Activated T-helper 1 cell treated with anti-CD3 and anti-CD28 coated beads, Interleukin-12 subunit alpha, Interleukin-12 subunit beta, Interleukin-2, Interleukin-4 antibody, amounts not matched to agents 30 ng/mL and 10 ng/mL and 1 ng/mL, durations not matched to agents 14 hours and 24 hours and 36 hours (primary cell): ENCODE measurements at regions of chr1 and their contacts with region 1.

Region 1: GRCh38 chr1:174800216-174800851 is 199.4 kb upstream of the CACYBP start:
- DNase-seq: peak; percentile 4
- H3K4me3 Mint-ChIP-seq: no peak overlapping the region
- H3K27ac Mint-ChIP-seq: no peak overlapping the region
- H3K4me1 Mint-ChIP-seq: peaks cover 15% of the 10 kb centered on the region
- H3K27me3 Mint-ChIP-seq: no peaks in the 10 kb centered on the region

Region 2: DNA sequence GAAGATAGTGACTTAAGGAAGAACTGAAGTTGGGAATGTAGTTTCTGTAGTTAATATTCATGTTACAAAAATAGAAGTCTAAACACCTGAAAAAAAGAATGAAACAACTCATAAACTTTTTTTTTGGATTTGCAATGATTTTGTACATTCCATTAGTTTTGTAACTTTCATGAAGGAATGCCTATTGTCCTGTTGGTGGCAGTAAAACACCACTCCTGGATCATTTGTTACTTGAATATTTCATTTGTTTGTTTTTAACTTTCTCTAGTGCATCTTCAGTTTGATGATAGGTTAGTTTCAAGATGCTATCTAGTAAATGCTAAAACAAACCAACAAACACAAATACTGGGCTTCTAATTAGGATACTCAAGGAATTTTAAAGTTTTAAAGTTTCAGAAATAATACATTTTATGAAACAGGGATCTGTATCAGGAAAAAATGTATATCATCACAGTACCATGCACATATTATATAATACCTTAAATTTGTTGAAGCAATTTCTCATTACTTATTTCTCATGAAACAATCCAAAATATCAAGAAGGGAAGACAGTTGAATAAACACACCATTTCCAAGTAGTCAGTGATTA is 30.3 kb before region 1 on chr1:
- intact Hi-C with region 1: loop called (anchors 2 kb)
- DNase-seq: no peak
- H3K4me3 Mint-ChIP-seq: no peak overlapping the region
- H3K27ac Mint-ChIP-seq: no peak overlapping the region
- H3K4me1 Mint-ChIP-seq: peaks cover 13% of the 10 kb centered on the region
- H3K27me3 Mint-ChIP-seq: no peaks in the 10 kb centered on the region

Region 3: DNA sequence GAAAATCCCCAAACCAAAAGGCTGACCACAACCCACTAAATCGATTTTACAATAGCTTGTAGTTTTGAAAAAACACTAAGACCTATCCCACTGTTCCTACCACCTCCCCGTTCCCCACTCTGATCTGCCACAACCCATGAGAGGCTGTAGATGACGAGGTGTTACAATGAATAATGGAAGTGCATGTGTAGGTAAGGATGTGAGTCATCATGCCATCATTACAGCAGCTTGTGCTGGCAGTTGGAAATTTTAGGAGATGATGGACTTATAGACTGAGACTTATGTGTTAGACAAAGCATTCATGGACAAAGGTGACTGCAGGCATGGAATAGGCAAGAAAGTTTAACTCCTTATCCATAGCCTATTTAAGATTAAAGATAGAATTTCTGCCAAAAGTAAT is 14.7 kb after region 1 on chr1:
- intact Hi-C with region 1: loop called (anchors 2 kb)
- DNase-seq: no peak
- H3K4me3 Mint-ChIP-seq: no peak overlapping the region
- H3K27ac Mint-ChIP-seq: no peak overlapping the region
- H3K4me1 Mint-ChIP-seq: peaks cover 28% of the 10 kb centered on the region
- H3K27me3 Mint-ChIP-seq: peaks cover 3% of the 10 kb centered on the region

Region 4: DNA sequence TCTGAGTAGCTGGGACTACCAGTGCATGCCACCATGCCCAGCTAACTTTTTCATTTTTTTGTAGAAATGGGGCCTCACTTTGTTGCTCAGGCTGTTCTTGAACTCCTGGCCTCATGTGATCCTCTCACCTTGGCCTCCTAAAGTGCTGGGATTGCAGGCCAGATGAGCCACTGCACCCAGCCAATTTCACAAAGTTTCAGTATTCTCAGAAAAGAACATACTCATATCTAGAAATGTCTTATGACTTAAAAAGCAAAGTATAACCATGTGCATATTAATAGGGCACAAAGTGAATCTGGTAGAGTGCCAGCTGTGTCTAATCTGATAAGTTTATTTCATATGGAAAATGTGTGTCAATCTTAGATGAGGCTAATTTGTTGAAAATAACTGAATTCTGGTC is 111.9 kb after region 1 on chr1:
- intact Hi-C with region 1: loop called (anchors 5 kb)
- DNase-seq: no peak
- H3K4me3 Mint-ChIP-seq: no peak overlapping the region
- H3K27ac Mint-ChIP-seq: peak overlapping the region; percentile 27
- H3K4me1 Mint-ChIP-seq: peaks cover 27% of the 10 kb centered on the region
- H3K27me3 Mint-ChIP-seq: no peaks in the 10 kb centered on the region